Activated B cell treated with CpG ODN at 0.5 μM for 24 hours (primary cell): ENCODE measurements at regions of chr15 and their contacts with region 1.

Region 1: GRCh38 chr15:25438601-25439368 is at the start of gene UBE3A:
- DNase-seq: peak; percentile 93
- ATAC-seq: peak; percentile 92
- H3K4me3 Mint-ChIP-seq: peak within 1 kb of the TSS; percentile 88
- H3K27ac Mint-ChIP-seq: peak within 1 kb of the TSS; percentile 91
- H3K4me1 Mint-ChIP-seq: peaks cover 44% of the 10 kb centered on the region
- H3K27me3 Mint-ChIP-seq: no peaks in the 10 kb centered on the region
- CTCF ChIP-seq: no peak
- total RNA-seq, gene UBE3A: 106 and 122 TPM in 2 replicates

Region 2: DNA sequence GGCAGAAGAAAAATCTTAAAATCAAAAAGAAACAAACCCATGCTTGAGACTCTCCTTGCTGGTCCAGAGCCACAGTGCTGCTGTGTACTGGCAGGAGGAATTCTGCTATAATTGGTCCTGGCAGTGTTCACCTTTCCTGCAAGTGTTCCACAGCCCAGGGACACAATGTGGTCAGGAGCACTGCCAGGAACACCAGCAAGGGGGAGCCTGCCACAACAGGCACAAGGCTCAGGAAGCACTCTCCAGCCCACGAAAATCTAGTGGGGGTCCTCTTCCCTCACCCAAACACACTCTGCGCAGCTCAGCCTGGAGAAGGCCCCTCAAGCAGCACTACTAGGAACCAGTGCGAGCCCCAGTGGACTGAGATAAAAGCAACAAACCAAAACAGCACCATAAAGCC is 92.8 kb before region 1 on chr15:
- CTCF ChIA-PET with region 1: no interaction called
- POLR2A ChIA-PET with region 1: no interaction called
- intact Hi-C with region 1: loop called (anchors 5 kb)
- DNase-seq: no peak
- ATAC-seq: no peak
- H3K4me3 Mint-ChIP-seq: no peak overlapping the region
- H3K27ac Mint-ChIP-seq: no peak overlapping the region
- H3K4me1 Mint-ChIP-seq: peaks cover 9% of the 10 kb centered on the region
- H3K27me3 Mint-ChIP-seq: no peaks in the 10 kb centered on the region
- CTCF ChIP-seq: no peak

Region 3: DNA sequence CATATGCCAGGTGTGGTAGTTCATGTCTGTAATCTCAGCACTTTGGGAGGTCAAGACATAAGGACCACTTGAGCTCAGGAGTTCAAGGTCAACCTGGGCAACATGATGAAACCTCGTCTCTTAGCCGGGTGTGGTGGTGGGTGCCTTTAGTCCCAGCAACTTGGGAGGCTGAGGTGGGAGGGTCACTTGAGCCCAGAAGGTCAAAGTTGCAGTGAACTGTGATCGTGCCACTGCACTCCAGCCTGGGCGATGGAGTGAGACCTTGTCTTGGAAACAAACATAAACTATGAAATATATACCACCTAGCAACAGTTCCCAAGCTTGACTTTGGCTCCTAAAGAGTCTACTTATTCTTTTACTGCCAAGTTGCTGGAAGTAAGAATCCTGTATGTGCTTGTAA is 30.8 kb before region 1 on chr15:
- CTCF ChIA-PET with region 1: no interaction called
- POLR2A ChIA-PET with region 1: interaction called, 6 read pairs
- intact Hi-C with region 1: loop called (anchors 2 kb)
- DNase-seq: no peak
- ATAC-seq: no peak
- H3K4me3 Mint-ChIP-seq: no peak overlapping the region
- H3K27ac Mint-ChIP-seq: no peak overlapping the region
- H3K4me1 Mint-ChIP-seq: peaks cover 72% of the 10 kb centered on the region
- H3K27me3 Mint-ChIP-seq: no peaks in the 10 kb centered on the region
- CTCF ChIP-seq: no peak

Region 4: GRCh38 chr15:25739687-25740121 is 300.9 kb after region 1 on chr15:
- CTCF ChIA-PET with region 1: no interaction called
- POLR2A ChIA-PET with region 1: no interaction called
- intact Hi-C with region 1: no loop called
- DNase-seq: no peak
- ATAC-seq: peak; percentile 78
- H3K4me3 Mint-ChIP-seq: no peak overlapping the region
- H3K27ac Mint-ChIP-seq: no peak overlapping the region
- H3K4me1 Mint-ChIP-seq: peaks cover 20% of the 10 kb centered on the region
- H3K27me3 Mint-ChIP-seq: peaks cover 37% of the 10 kb centered on the region
- CTCF ChIP-seq: no peak

Region 5: GRCh38 chr15:25933456-25934158 is 494.8 kb after region 1 on chr15:
- CTCF ChIA-PET with region 1: no interaction called
- POLR2A ChIA-PET with region 1: no interaction called
- intact Hi-C with region 1: loop called (anchors 10 kb)
- DNase-seq: peak; percentile 24
- ATAC-seq: peak; percentile 91
- H3K4me3 Mint-ChIP-seq: peak overlapping the region; percentile 76
- H3K27ac Mint-ChIP-seq: no peak overlapping the region
- H3K4me1 Mint-ChIP-seq: peaks cover 15% of the 10 kb centered on the region
- H3K27me3 Mint-ChIP-seq: peaks cover 6% of the 10 kb centered on the region
- CTCF ChIP-seq: no peak